Activated B cell treated with CpG ODN at 0.5 μM for 24 hours (primary cell): ENCODE measurements at regions of chr6 and their contacts with region 1.

Region 1: GRCh38 chr6:149129371-149130077 is 188.0 kb upstream of the TAB2 start:
- DNase-seq: no peak
- ATAC-seq: peak; percentile 91
- H3K4me3 Mint-ChIP-seq: no peak overlapping the region
- H3K27ac Mint-ChIP-seq: peak overlapping the region; percentile 27
- H3K4me1 Mint-ChIP-seq: peaks cover 27% of the 10 kb centered on the region
- H3K27me3 Mint-ChIP-seq: no peaks in the 10 kb centered on the region
- CTCF ChIP-seq: no peak

Region 2: GRCh38 chr6:148831064-148831463 is 298.5 kb before region 1 on chr6:
- CTCF ChIA-PET with region 1: no interaction called
- POLR2A ChIA-PET with region 1: no interaction called
- intact Hi-C with region 1: no loop called
- DNase-seq: no peak
- ATAC-seq: peak; percentile 64
- H3K4me3 Mint-ChIP-seq: peak overlapping the region; percentile 67
- H3K27ac Mint-ChIP-seq: peak overlapping the region; percentile 62
- H3K4me1 Mint-ChIP-seq: peaks cover 43% of the 10 kb centered on the region
- H3K27me3 Mint-ChIP-seq: no peaks in the 10 kb centered on the region
- CTCF ChIP-seq: no peak

Region 3: DNA sequence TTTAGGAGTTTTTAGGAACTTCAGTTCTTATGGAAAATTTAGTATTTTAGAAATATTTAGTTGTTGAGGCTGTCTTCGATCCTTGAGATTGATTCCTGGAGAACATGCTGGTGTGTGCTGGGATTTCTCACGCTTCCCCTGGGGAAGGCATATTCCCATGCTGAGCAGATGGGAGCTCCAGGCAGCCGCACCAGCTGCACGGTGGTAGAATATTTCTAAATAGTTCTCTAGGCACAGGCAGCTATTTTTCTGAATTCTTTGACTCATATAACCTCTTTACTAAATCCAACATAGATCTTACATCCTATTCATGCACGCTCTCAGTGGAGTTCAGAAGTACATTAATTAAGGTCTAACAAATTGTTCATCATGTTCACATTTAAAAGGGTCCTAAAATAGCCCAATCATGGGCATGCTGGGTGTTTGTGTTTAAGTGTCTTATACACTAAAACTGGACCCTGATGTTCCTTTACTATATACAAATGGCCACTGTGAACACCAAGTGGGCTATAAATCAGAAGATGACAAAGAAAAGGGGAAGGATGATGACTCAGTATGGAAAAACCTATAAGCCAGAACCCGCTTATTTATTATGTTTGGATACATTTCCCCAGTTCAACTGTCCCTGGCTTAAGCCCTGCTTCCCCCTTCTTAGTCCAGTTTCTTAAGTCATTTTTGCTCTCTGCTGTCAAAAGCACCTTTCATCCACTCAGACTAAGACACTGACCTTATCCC is 244.2 kb before region 1 on chr6:
- CTCF ChIA-PET with region 1: no interaction called
- POLR2A ChIA-PET with region 1: no interaction called
- intact Hi-C with region 1: loop called (anchors 10 kb)
- DNase-seq: no peak
- ATAC-seq: no peak
- H3K4me3 Mint-ChIP-seq: no peak overlapping the region
- H3K27ac Mint-ChIP-seq: no peak overlapping the region
- H3K4me1 Mint-ChIP-seq: peaks cover 22% of the 10 kb centered on the region
- H3K27me3 Mint-ChIP-seq: no peaks in the 10 kb centered on the region
- CTCF ChIP-seq: no peak

Region 4: DNA sequence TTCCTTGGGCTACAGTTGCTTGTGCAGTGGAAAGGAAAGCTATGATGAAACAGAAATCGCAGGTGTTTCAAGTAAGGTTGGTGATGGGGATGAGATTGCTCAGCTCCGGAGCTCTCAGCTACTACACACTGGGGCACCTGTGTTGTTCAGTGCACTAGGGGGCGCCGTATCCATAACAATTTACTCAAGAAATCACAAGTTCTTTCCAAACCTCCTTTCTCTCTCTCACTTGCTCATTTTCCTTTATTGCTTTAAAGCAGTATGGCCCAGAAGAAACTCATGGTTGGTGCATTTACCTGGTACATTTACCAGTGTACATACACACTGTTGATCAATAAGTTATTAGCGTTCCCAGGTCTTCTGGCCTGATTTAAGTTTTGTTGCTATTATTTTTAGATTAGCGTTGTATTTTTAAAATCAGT is 47.2 kb before region 1 on chr6:
- CTCF ChIA-PET with region 1: no interaction called
- POLR2A ChIA-PET with region 1: no interaction called
- intact Hi-C with region 1: loop called (anchors 5 kb)
- DNase-seq: peak; percentile 43
- ATAC-seq: peak; percentile 75
- H3K4me3 Mint-ChIP-seq: no peak overlapping the region
- H3K27ac Mint-ChIP-seq: no peak overlapping the region
- H3K4me1 Mint-ChIP-seq: peaks cover 13% of the 10 kb centered on the region
- H3K27me3 Mint-ChIP-seq: no peaks in the 10 kb centered on the region
- CTCF ChIP-seq: peak; percentile 26

Region 5: GRCh38 chr6:149140137-149140909 is 10.8 kb after region 1 on chr6:
- CTCF ChIA-PET with region 1: interaction called, 3 read pairs
- POLR2A ChIA-PET with region 1: interaction called, 4 read pairs
- intact Hi-C with region 1: loop called (anchors 1 kb)
- DNase-seq: peak; percentile 25
- ATAC-seq: peak; percentile 91
- H3K4me3 Mint-ChIP-seq: peak overlapping the region; percentile 70
- H3K27ac Mint-ChIP-seq: peak overlapping the region; percentile 77
- H3K4me1 Mint-ChIP-seq: peaks cover 17% of the 10 kb centered on the region
- H3K27me3 Mint-ChIP-seq: no peaks in the 10 kb centered on the region
- CTCF ChIP-seq: no peak